ENCODE measurements at regions of chr9 and their contacts with region 1.

Region 1: GRCh38 chr9:35287986-35288632 is 126.3 kb downstream of the UNC13B start:
- DNase-seq: no peak
- ATAC-seq: no peak
- H3K4me3 ChIP-seq: no peak overlapping the region
- H3K27ac ChIP-seq: no peak overlapping the region
- H3K4me1 ChIP-seq: no peaks in the 10 kb centered on the region
- H3K27me3 ChIP-seq: no peaks in the 10 kb centered on the region
- CTCF ChIP-seq: no peak
- POLR2A ChIP-seq: no peak

Region 2: DNA sequence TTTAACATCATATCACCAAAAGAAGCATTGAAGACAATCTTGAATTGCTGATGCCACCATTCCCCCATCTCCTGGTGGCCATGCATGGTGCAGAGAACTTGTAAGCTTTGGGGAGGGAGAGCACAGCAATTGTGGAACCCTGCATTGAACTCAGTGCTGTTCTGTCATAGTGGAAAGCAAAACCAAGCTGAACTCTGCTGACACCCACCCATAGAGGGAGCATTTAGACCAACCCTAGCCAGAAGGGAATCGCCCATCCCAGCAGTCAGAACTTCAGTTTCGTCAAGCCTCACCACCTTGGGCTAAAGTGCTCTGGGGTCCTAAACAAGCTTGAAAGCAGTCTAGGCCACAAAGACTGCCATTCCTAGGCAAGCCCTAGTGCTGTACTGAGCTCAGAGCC is 164.4 kb after region 1 on chr9:
- intact Hi-C with region 1: loop called (anchors 10 kb)
- DNase-seq: no peak
- ATAC-seq: no peak
- H3K4me3 ChIP-seq: no peak overlapping the region
- H3K27ac ChIP-seq: no peak overlapping the region
- H3K4me1 ChIP-seq: no peaks in the 10 kb centered on the region
- H3K27me3 ChIP-seq: no peaks in the 10 kb centered on the region
- CTCF ChIP-seq: no peak
- POLR2A ChIP-seq: no peak

Measured in body of pancreas (tissue), 4 donors.